Dendritic cell treated with granulocyte-macrophage colony-stimulating factor and Interleukin-4, amounts not matched to agents 40 ng/mL and 50 ng/mL, for 4 days (primary cell): ENCODE measurements at regions of chr6 and their contacts with region 1.

Region 1: GRCh38 chr6:154352898-154353585 is 3.6 kb downstream of the IPCEF1 start:
- H3K4me3 Mint-ChIP-seq: peak overlapping the region; percentile 13
- H3K27ac Mint-ChIP-seq: peak overlapping the region; percentile 87
- H3K4me1 Mint-ChIP-seq: peaks cover 48% of the 10 kb centered on the region
- H3K27me3 Mint-ChIP-seq: no peaks in the 10 kb centered on the region

Region 2: GRCh38 chr6:154301839-154302752 is 50.9 kb before region 1 on chr6:
- intact Hi-C with region 1: loop called (anchors 5 kb)
- H3K4me3 Mint-ChIP-seq: no peak overlapping the region
- H3K27ac Mint-ChIP-seq: peak overlapping the region; percentile 75
- H3K4me1 Mint-ChIP-seq: peaks cover 70% of the 10 kb centered on the region
- H3K27me3 Mint-ChIP-seq: no peaks in the 10 kb centered on the region